Ovary (tissue), 10 donors: ENCODE measurements at regions of chr3 and their contacts with region 1.

Region 1: GRCh38 chr3:188947401-188948280 is 224.1 kb upstream of the TPRG1 start:
- DNase-seq: peak; percentile 94 to 99 (median 95)
- H3K4me3 ChIP-seq: peak overlapping the region; percentile 45
- H3K27ac ChIP-seq: peak overlapping the region; percentile 68 to 90
- H3K4me1 ChIP-seq: peaks cover 23% of the 10 kb centered on the region
- H3K27me3 ChIP-seq: no peaks in the 10 kb centered on the region
- CTCF ChIP-seq: peak; percentile 8 to 78 (median 58)
- EP300 ChIP-seq: peak; percentile 100
- POLR2A ChIP-seq: peak; percentile 67

Region 2: GRCh38 chr3:188220988-188221818 is 726.4 kb before region 1 on chr3:
- intact Hi-C with region 1: loop called in 1 of 4 experiments (anchors 5 kb)
- DNase-seq: peak in 1 of 5 donors; percentile 51
- H3K4me3 ChIP-seq: no peak overlapping the region
- H3K27ac ChIP-seq: no peak overlapping the region
- H3K4me1 ChIP-seq: peaks cover 18% of the 10 kb centered on the region
- H3K27me3 ChIP-seq: no peaks in the 10 kb centered on the region
- CTCF ChIP-seq: no peak
- EP300 ChIP-seq: peak; percentile 99
- POLR2A ChIP-seq: no peak

Region 3: DNA sequence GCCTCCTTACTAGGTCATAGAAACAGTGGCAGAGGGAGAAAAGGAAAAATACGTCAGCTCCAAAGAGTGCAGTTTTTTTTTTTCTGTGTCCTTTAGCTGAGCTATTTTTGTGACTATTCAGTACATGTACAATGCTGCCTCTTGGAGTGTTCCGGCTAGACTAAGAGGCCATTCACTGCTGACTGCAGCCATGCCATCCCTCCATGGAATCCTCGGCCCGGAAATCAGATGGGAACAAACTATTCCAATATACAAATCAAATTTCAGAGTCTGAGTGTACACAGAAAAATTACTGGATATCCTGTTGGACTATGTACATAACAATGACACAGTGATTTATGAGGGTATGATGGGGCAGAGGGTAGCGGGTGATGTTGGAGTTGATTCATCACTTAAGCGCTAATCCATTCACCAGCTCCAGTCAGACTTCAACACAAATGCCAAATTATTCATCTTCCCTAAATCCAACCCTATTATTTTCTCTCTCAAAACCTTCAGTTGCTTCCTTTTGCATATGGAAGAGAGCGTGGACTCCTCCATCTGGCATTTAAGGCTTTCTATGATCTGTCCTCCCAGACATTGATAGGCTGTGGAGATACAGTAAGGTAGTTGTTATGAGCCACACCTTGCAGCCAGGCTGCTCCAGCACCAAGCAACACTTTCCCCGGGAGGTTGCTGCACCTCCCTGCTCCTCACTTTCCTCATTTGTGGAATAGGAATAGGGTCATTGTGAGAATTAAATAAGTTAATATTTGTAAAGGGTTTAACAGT is 684.5 kb before region 1 on chr3:
- intact Hi-C with region 1: loop called in 1 of 4 experiments (anchors 5 kb)
- DNase-seq: no peak
- H3K4me3 ChIP-seq: no peak overlapping the region
- H3K27ac ChIP-seq: no peak overlapping the region
- H3K4me1 ChIP-seq: peaks cover 15% of the 10 kb centered on the region
- H3K27me3 ChIP-seq: no peaks in the 10 kb centered on the region
- CTCF ChIP-seq: no peak
- EP300 ChIP-seq: no peak
- POLR2A ChIP-seq: no peak

Region 4: GRCh38 chr3:188869628-188870027 is 78.0 kb before region 1 on chr3:
- intact Hi-C with region 1: no loop called
- DNase-seq: no peak
- H3K4me3 ChIP-seq: no peak overlapping the region
- H3K27ac ChIP-seq: no peak overlapping the region
- H3K4me1 ChIP-seq: no peaks in the 10 kb centered on the region
- H3K27me3 ChIP-seq: no peaks in the 10 kb centered on the region
- CTCF ChIP-seq: no peak
- EP300 ChIP-seq: no peak
- POLR2A ChIP-seq: no peak

Region 5: GRCh38 chr3:190526787-190527762 is 1579.4 kb after region 1 on chr3:
- intact Hi-C with region 1: no loop called
- DNase-seq: no peak
- H3K4me3 ChIP-seq: no peak overlapping the region
- H3K27ac ChIP-seq: no peak overlapping the region
- H3K4me1 ChIP-seq: no peaks in the 10 kb centered on the region
- H3K27me3 ChIP-seq: no peaks in the 10 kb centered on the region
- CTCF ChIP-seq: no peak
- EP300 ChIP-seq: no peak
- POLR2A ChIP-seq: no peak